HepG2 (cell line): ENCODE measurements at regions of chr2 and their contacts with region 1.

Region 1: DNA sequence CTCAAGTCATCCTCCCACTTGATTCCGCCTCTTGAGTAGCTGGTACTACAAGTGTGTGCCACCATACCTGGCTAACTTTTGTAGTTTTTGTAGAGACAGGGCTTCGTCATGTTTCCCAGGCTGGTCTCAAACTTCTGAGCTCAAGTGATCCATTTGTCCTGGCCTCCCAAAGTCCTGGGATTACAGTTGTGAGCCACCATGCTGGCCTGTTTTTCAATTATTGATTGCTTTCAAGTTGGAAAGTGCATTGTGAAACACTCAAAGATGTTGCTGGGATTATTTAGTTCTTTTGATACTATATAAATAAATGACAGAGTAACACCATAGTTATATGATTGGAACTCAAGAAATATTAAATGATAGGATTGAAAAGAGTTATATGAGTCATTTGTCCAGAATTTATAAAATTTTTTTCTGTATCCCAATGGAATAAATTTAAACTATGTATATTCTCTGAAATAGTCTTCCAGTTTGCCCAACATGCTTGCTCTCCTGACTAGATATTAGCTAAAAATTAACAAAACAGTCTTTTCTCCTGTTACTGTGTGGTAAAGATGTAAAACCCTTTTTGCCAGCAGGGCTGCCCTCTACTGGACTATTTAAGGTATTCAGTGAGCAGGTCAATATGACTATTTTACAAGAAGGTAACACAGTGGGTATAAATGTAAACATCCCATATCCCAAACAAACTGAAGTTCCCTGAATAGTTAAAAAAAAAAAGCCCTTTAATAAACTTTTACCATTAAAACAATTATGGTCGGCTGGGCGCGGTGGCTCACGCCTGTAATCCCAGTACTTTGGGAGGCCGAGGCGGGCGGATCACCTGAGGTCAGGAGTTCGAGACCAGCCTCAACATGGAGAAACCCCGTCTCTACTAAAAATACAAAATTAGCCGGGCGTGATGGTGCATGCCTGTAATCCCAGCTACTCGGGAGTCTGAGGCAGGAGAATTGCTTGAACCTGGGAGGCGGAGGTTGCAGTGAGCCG is 42.7 kb downstream of the ACSL3 start:
- DNase-seq: peak; percentile 86
- ATAC-seq: peak; percentile 76
- H3K4me3 ChIP-seq: no peak overlapping the region
- H3K27ac ChIP-seq: peak overlapping the region; percentile 48
- H3K4me1 ChIP-seq: peaks cover 100% of the 10 kb centered on the region
- H3K27me3 ChIP-seq: no peaks in the 10 kb centered on the region
- CTCF ChIP-seq: peak; percentile 81
- EP300 ChIP-seq: peak in 1 of 2 experiments; percentile 33; a peak in 1 of 4 replicates
- POLR2A ChIP-seq: no peak
- RAD21 ChIP-seq: peak; percentile 89

Region 2: GRCh38 chr2:222734703-222735014 is 168.9 kb before region 1 on chr2:
- CTCF ChIA-PET with region 1: no interaction called
- POLR2A ChIA-PET with region 1: interaction called, 3 read pairs
- in situ Hi-C with region 1: no loop called
- intact Hi-C with region 1: loop called (anchors 1 kb)
- DNase-seq: peak; percentile 49
- ATAC-seq: peak; percentile 33
- H3K4me3 ChIP-seq: no peak overlapping the region; a peak in 1 of 6 replicates
- H3K27ac ChIP-seq: peak overlapping the region; percentile 87
- H3K4me1 ChIP-seq: peaks cover 87% of the 10 kb centered on the region
- H3K27me3 ChIP-seq: no peaks in the 10 kb centered on the region
- CTCF ChIP-seq: no peak
- EP300 ChIP-seq: no peak
- POLR2A ChIP-seq: no peak
- RAD21 ChIP-seq: no peak

Region 3: DNA sequence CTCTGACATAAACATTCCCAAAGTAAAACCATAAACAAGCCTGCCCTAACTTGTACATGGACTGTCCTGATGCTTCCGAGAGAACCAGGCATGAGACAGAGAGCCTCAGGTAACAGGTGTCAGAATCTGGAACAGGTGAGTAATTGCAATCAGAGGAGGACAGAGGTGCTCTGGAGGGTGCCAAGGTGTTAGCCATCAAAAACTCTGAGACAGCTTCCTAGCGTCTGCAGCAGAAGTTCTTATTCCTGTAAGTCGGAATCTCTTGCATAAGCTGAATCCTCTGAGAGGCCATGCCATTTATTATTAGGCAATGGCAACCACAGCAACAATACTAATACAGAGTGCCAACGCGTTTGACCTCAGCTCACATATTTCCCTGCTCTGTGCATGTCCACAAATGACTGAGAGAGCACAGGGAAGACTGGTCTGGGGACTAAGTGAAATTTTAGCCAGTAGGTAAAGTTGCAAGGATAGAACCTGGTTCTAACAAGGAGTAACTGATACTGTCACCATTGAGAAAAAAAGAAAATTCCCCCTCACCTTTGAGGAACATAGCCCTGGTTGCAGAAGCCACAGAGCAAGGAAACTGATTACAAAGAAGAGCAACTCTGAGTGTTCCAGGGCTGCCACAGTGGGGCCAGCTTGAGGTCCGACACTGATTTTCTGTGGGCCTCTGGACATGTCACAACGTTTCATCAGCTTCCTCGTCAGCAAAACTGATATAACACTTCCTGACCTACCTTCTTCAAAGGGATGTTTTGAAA is 97.8 kb before region 1 on chr2:
- CTCF ChIA-PET with region 1: no interaction called
- POLR2A ChIA-PET with region 1: interaction called, 13 read pairs
- in situ Hi-C with region 1: no loop called
- intact Hi-C with region 1: no loop called
- DNase-seq: peak; percentile 74
- ATAC-seq: peak; percentile 93
- H3K4me3 ChIP-seq: peak overlapping the region; percentile 29 to 52 (median 34)
- H3K27ac ChIP-seq: peak overlapping the region; percentile 81
- H3K4me1 ChIP-seq: peaks cover 49% of the 10 kb centered on the region
- H3K27me3 ChIP-seq: no peaks in the 10 kb centered on the region
- CTCF ChIP-seq: peak; percentile 21; the same call in 1 of the 2 replicates
- EP300 ChIP-seq: peak in 1 of 2 experiments; percentile 89; a peak in 2 of 4 replicates
- POLR2A ChIP-seq: peak in 1 of 2 experiments; percentile 25; a peak in 1 of 4 replicates
- RAD21 ChIP-seq: no peak